ENCODE measurements at regions of chr4 and their contacts with region 1.

Region 1: GRCh38 chr4:43325220-43325967 is 432.9 kb downstream of the GRXCR1 start:
- DNase-seq: no peak
- H3K4me3 Mint-ChIP-seq: no peak overlapping the region
- H3K27ac Mint-ChIP-seq: no peak overlapping the region
- H3K4me1 Mint-ChIP-seq: no peaks in the 10 kb centered on the region
- H3K27me3 Mint-ChIP-seq: no peaks in the 10 kb centered on the region
- CTCF ChIP-seq: no peak

Region 2: GRCh38 chr4:42412251-42412650 is 913.1 kb before region 1 on chr4:
- CTCF ChIA-PET with region 1: interaction called, 13 read pairs
- intact Hi-C with region 1: no loop called
- DNase-seq: no peak
- H3K4me3 Mint-ChIP-seq: no peak overlapping the region
- H3K27ac Mint-ChIP-seq: no peak overlapping the region
- H3K4me1 Mint-ChIP-seq: no peaks in the 10 kb centered on the region
- H3K27me3 Mint-ChIP-seq: no peaks in the 10 kb centered on the region
- CTCF ChIP-seq: no peak

Measured in Calu3 (cell line).